ENCODE measurements at regions of chr2 and their contacts with region 1.

Region 1: GRCh38 chr2:163039266-163039665 is 200.7 kb upstream of the KCNH7 start:
- DNase-seq: no peak
- H3K4me3 ChIP-seq: no peak overlapping the region
- H3K27ac ChIP-seq: no peak overlapping the region
- H3K4me1 ChIP-seq: no peaks in the 10 kb centered on the region
- H3K27me3 ChIP-seq: no peaks in the 10 kb centered on the region
- CTCF ChIP-seq: no peak
- POLR2A ChIP-seq: no peak

Region 2: GRCh38 chr2:161352719-161353118 is 1686.5 kb before region 1 on chr2:
- intact Hi-C with region 1: no loop called
- DNase-seq: no peak
- H3K4me3 ChIP-seq: no peak overlapping the region
- H3K27ac ChIP-seq: no peak overlapping the region
- H3K4me1 ChIP-seq: no peaks in the 10 kb centered on the region
- H3K27me3 ChIP-seq: no peaks in the 10 kb centered on the region
- CTCF ChIP-seq: no peak
- POLR2A ChIP-seq: no peak

Region 3: GRCh38 chr2:162782138-162782537 is 257.1 kb before region 1 on chr2:
- intact Hi-C with region 1: loop called (anchors 5 kb)
- DNase-seq: no peak
- H3K4me3 ChIP-seq: no peak overlapping the region
- H3K27ac ChIP-seq: no peak overlapping the region
- H3K4me1 ChIP-seq: no peaks in the 10 kb centered on the region
- H3K27me3 ChIP-seq: no peaks in the 10 kb centered on the region
- CTCF ChIP-seq: no peak
- POLR2A ChIP-seq: no peak

Region 4: DNA sequence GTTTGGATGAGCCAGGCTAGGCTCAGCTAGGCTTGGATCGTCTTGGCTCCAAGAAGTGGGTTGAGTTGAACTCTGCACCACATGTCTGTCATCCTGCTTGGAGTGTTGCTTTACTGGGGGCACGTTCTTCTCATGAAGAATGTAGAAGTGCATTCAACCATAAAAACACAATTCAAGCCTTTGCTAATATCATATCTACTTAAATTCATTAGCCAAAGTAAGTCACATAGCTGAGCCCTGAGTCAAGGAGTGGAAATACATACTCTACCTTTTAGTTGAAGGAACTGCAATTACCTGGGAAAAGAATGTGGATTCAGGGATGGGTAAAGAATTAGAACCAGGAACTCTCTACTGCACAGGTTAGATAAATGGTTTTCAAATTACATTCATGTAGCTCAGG is 159.7 kb after region 1 on chr2:
- intact Hi-C with region 1: no loop called
- DNase-seq: no peak
- H3K4me3 ChIP-seq: no peak overlapping the region
- H3K27ac ChIP-seq: no peak overlapping the region
- H3K4me1 ChIP-seq: no peaks in the 10 kb centered on the region
- H3K27me3 ChIP-seq: no peaks in the 10 kb centered on the region
- CTCF ChIP-seq: no peak
- POLR2A ChIP-seq: no peak

Measured in vagina (tissue), 2 donors.